Activated B cell treated with CpG ODN at 0.5 μM for 24 hours (primary cell): ENCODE measurements at regions of chr12 and their contacts with region 1.

Region 1: DNA sequence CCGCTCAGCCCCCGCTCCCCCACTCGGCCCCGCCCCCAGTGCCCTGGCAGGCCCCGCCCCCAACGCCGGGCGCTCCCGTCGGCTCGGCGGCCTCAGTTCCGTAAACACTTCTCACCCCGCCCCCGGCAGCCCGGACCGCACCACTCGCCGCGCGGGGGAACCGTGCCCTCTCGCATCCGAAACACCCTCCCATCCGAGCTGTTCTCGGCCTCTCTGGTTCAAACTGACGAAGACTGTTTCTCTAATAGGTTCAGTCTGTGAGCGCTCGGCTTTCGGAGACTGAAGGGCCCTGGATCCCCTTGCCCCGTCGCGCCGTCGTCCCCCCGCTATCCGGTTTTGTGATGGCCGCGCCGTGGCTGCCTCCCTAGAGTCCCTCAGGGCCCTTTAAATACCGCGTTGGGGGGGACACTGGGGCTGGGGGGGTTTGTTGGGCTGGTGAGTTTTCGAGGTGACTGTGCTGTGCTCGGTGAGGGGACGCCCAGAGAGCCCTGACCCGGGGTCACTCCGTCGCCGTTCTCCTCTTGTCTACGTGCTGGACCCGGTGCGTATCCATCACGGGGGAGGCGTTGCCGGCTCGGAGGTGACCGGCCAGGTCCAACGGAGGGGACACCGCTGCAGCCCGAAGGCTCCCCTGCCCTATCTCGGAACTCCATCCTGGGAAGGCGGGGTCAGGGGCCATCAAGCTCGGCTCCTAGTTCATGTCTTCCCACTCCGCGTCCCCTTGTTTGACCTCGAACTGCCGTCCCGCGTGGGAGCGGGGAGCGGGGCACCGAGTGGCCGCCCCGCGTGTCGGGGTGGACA is at the start of gene TCP11L2:
- DNase-seq: peak; percentile 92
- ATAC-seq: peak; percentile 62
- H3K4me3 Mint-ChIP-seq: peak within 1 kb of the TSS; percentile 97
- H3K27ac Mint-ChIP-seq: peak within 1 kb of the TSS; percentile 100
- H3K4me1 Mint-ChIP-seq: peaks cover 71% of the 10 kb centered on the region
- H3K27me3 Mint-ChIP-seq: no peaks in the 10 kb centered on the region
- CTCF ChIP-seq: no peak
- total RNA-seq, gene TCP11L2: 48.0 and 52.5 TPM in 2 replicates

Region 2: GRCh38 chr12:105141320-105141918 is 1161.2 kb before region 1 on chr12:
- CTCF ChIA-PET with region 1: no interaction called
- POLR2A ChIA-PET with region 1: no interaction called
- intact Hi-C with region 1: no loop called
- DNase-seq: no peak
- ATAC-seq: no peak
- H3K4me3 Mint-ChIP-seq: no peak overlapping the region
- H3K27ac Mint-ChIP-seq: no peak overlapping the region
- H3K4me1 Mint-ChIP-seq: peaks cover 9% of the 10 kb centered on the region
- H3K27me3 Mint-ChIP-seq: no peaks in the 10 kb centered on the region
- CTCF ChIP-seq: no peak

Region 3: GRCh38 chr12:105357162-105357691 is 945.4 kb before region 1 on chr12:
- CTCF ChIA-PET with region 1: no interaction called
- POLR2A ChIA-PET with region 1: no interaction called
- intact Hi-C with region 1: loop called (anchors 10 kb)
- DNase-seq: no peak
- ATAC-seq: peak; percentile 46
- H3K4me3 Mint-ChIP-seq: peak overlapping the region; percentile 46
- H3K27ac Mint-ChIP-seq: peak overlapping the region; percentile 37
- H3K4me1 Mint-ChIP-seq: peaks cover 47% of the 10 kb centered on the region
- H3K27me3 Mint-ChIP-seq: no peaks in the 10 kb centered on the region
- CTCF ChIP-seq: no peak

Region 4: GRCh38 chr12:106247674-106248311 is 54.8 kb before region 1 on chr12 and contains the start of gene CKAP4:
- CTCF ChIA-PET with region 1: interaction called, 6 read pairs
- POLR2A ChIA-PET with region 1: interaction called, 84 read pairs
- intact Hi-C with region 1: loop called (anchors 1 kb)
- DNase-seq: peak; percentile 73
- ATAC-seq: peak; percentile 71
- H3K4me3 Mint-ChIP-seq: peak within 1 kb of the TSS; percentile 82
- H3K27ac Mint-ChIP-seq: peak within 1 kb of the TSS; percentile 80
- H3K4me1 Mint-ChIP-seq: peaks cover 54% of the 10 kb centered on the region
- H3K27me3 Mint-ChIP-seq: no peaks in the 10 kb centered on the region
- CTCF ChIP-seq: no peak
- total RNA-seq, gene CKAP4: 15.9 and 17.1 TPM in 2 replicates

Region 5: DNA sequence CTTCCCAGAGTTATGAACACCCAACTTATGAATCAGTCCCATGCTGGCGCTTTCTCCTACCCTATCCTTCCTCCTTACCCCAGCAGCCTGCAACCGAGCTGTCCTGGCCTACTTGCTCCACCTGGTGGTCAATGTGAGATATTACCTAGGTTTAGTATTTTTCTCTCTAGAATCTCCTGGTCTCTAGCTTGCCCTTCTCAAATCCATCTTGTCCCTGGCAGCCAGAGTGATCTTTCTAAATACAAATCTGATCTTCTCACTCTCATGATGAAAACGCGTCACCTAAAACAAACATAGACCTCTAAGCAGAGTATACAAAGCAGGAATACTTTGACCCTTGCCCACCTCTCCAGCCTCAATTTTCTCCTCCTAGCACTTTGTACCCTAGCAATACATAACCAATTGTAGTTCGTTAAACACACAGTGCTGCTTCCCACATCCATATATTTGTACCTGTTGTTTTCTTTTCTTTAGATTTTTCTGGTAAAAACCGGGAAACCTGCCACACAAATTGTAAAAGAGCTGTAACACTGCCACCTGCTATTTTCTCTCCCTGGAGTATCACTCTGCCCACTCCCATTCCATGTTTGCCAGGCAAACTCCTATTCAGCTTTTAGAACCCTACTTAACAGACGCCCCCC is 20.0 kb before region 1 on chr12:
- CTCF ChIA-PET with region 1: interaction called, 31 read pairs
- POLR2A ChIA-PET with region 1: interaction called, 27 read pairs
- intact Hi-C with region 1: loop called (anchors 1 kb)
- DNase-seq: no peak
- ATAC-seq: peak; percentile 84
- H3K4me3 Mint-ChIP-seq: no peak overlapping the region
- H3K27ac Mint-ChIP-seq: no peak overlapping the region
- H3K4me1 Mint-ChIP-seq: peaks cover 29% of the 10 kb centered on the region
- H3K27me3 Mint-ChIP-seq: peaks cover 5% of the 10 kb centered on the region
- CTCF ChIP-seq: peak; percentile 76

Region 6: DNA sequence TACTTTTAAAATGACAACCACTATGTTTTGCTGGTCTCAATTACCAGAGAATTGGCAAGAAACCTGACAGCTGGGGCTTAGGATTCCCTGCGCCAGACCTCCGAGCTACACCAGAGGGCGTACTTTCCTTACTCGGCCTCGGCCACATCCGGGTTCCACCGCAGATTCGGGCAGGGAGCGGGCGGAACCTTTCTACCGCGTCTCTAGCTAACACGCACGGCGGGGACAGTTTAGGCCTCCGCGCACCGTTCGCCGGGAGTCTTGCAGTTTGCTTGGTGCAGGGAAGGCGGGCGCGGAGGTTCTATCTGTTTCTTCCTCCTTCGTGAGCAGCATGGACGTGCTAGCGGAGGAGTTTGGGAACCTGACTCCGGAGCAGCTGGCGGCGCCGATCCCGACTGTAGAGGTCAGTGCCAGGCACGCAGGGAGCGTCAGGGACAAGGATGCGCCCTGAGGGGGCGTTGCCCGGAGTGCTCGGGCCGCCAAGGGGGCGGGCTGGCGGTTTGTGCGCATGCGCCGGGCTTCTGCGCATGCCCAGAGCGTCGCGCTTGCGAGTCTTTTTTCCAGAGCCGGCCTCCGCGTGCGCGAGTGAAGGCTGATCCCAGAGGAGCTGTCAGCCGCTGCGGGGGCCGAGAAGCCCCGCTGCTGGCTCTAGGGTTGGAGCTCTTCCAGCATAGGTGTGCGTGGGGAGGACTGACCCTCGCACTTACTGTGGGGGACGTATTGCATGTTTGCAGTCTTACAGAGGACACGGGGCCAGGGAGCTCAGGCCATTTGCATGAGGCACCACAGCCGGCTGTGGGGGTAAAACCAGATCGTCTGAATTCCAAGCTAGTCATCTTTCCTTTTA is 55.2 kb after region 1 on chr12 and contains the start of gene POLR3B:
- CTCF ChIA-PET with region 1: interaction called, 8 read pairs
- POLR2A ChIA-PET with region 1: interaction called, 36 read pairs
- intact Hi-C with region 1: loop called (anchors 1 kb)
- DNase-seq: peak; percentile 96
- ATAC-seq: peak; percentile 92
- H3K4me3 Mint-ChIP-seq: peak within 1 kb of the TSS; percentile 95
- H3K27ac Mint-ChIP-seq: peak within 1 kb of the TSS; percentile 92
- H3K4me1 Mint-ChIP-seq: peaks cover 16% of the 10 kb centered on the region
- H3K27me3 Mint-ChIP-seq: no peaks in the 10 kb centered on the region
- CTCF ChIP-seq: peak; percentile 49
- total RNA-seq, gene POLR3B: 7.3 and 8.0 TPM in 2 replicates

Region 7: DNA sequence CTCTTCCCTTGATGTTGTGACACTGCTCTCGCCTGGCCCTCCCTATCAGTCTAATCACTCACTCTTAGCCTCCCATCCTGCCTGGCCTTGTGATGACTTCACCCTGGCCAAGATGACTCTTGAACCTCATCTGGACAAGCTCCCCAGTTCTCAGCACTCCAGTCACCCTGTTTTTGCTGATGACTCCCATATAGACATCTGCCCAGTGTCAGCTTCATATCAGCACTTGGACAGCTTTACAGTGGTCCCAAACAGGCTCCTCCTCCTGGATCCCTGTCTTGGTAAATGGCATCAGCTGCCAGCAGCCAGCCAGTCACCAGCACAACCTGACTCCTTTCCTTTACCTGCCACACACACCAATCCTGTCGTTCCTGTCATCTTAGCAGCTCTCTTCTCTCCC is 159.1 kb after region 1 on chr12:
- CTCF ChIA-PET with region 1: no interaction called
- POLR2A ChIA-PET with region 1: no interaction called
- intact Hi-C with region 1: no loop called
- DNase-seq: no peak
- ATAC-seq: no peak
- H3K4me3 Mint-ChIP-seq: no peak overlapping the region
- H3K27ac Mint-ChIP-seq: no peak overlapping the region
- H3K4me1 Mint-ChIP-seq: no peaks in the 10 kb centered on the region
- H3K27me3 Mint-ChIP-seq: no peaks in the 10 kb centered on the region
- CTCF ChIP-seq: no peak

Region 8: GRCh38 chr12:106986625-106987430 is 684.2 kb after region 1 on chr12 and contains the start of gene MTERF2:
- CTCF ChIA-PET with region 1: no interaction called
- POLR2A ChIA-PET with region 1: no interaction called
- intact Hi-C with region 1: loop called (anchors 1 kb)
- DNase-seq: peak; percentile 61
- ATAC-seq: peak; percentile 99
- H3K4me3 Mint-ChIP-seq: peak within 1 kb of the TSS; percentile 95
- H3K27ac Mint-ChIP-seq: peak within 1 kb of the TSS; percentile 70
- H3K4me1 Mint-ChIP-seq: peaks cover 39% of the 10 kb centered on the region
- H3K27me3 Mint-ChIP-seq: no peaks in the 10 kb centered on the region
- CTCF ChIP-seq: no peak
- total RNA-seq, gene MTERF2: 8.3 and 9.4 TPM in 2 replicates